ENCODE measurements at regions of chr2 and their contacts with region 1.

Region 1: DNA sequence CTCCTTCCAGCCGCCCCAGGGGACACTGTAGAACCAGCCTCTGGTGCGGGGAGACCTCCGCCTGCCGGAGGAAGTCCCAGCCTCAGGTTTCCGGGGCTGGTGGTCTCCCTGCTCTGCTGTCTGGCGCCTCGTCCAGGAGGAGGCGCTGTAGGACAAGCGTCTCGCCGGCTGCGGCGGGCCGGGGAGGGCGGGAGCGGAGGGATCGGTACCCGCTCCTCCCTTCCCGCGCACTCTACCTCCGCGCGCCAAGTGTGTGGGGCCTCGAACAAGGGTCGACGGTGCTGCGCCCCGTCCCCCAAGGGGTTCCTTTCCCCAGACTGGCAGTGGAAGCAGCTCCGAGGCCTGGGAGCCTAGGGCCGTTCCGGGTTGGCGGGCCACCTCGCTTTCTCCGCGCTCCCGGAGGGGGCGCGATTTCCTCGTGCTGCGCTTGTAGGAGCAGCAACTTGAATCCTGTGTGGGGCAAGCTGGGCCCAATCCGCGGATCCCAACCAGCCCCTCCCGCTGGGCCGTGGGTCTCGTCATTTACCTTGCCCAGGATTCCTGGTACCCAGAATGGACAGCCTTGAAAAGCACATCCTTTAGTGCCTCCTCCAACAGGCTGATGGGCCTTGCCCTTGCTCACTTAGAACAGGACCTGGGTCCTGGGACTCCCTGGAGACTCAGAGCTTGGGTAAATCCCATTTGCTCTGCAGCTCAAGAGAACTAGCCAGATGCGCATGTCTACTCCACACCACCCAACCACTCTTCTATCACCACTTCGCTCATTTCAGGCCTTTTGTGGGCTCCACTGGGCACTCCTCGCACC is 10.6 kb upstream of the HOXD4 start:
- DNase-seq: peak; percentile 83

Region 2: DNA sequence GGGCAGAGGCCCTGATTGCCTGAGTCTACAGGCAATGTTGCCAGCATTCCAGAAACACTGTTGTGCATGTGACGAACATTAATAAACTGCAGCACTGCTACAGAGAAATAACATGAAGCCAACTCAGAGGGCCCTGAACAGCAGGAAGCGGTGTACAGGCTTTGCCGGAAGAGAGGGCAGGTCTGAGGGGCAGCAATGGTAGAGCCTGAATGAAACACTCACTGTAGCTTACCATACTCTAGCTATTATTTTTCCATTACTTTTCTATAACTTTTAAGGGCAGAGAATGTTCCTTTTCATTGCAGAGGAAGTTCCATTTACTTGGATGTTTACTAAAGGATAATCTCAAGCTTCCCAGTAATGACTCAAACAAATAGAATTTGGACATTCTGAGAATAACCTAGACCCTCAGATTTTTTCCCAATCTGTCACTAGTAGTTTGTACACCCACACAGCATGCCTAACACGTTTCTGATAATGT is 278.9 kb after region 1 on chr2:
- in situ Hi-C with region 1: no loop called
- DNase-seq: no peak

Region 3: DNA sequence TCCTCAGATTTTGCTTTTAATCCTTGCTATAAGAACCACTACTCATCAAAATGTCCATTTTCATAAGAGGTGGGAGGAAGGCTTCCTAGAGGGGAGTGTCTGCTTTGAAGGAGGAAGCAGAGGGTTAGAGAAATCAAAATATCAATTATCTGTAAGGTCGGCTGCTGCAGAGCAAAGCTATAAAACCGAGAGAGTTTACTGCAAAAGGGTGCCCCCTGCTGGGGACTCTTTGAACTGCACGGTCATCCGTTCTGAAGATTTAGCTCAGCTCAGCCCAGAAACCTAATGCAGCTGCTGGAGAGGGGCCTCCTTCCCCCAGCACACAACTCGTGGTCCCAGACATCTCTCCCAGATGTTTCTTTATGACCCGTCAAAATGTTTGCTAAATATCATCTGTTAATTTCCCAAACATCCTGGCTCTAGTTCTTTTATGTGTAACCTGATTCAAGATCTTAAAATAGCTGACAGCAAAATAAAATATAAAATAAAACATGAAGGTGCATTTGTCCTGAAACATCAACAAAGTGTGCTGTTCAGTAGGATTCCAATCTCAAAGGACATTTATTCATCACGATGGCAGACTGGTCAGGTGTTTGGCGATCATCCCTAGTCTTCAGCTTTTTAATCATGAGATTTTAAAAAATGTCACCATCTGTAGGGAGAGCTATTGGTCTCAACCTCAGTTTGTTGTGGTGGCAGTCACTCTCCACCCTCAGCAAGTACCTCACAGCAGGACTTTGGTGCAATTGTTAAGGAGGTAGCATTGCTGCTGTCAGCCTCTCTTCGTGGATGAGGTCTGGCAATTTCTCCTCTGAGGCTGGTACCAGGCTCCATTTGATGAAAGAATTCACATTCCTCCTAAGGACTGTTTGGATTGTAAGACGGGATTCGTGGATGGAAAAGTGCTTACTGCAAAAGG is 314.4 kb after region 1 on chr2:
- in situ Hi-C with region 1: loop called (anchors 25 kb)
- DNase-seq: peak; percentile 74

Region 4: DNA sequence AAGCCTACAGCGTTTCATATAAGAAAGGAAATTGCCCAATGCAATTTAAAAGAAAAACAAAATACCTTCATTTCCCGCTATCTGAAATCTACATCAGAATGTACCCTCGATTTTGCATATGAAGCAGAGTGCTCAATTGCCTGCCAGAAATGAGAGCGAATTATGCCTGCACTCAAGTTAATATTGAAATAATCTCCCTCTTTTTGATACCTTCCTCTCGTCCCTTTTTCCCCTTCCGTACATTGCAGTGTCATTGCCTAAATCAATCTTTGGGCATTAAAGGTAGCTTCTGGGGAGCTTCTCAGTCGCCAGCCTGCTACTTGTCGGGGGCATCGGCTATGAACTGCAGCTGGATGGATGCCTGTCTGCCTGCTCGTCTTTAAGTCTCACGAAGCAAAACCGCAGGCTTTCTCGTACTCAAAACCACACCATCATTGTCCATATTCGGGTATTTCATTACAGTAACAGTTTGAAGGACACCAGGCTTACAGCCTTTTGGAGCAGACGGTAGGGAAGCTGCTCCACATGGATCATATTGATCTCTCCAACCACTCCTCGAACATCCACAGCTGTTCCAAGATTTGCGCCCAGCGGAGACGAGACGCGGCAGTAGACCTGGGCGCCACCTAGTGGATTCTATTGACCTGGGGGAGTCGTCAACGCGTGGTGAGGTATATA is 1007.9 kb after region 1 on chr2:
- in situ Hi-C with region 1: loop called (anchors 25 kb)
- DNase-seq: peak; percentile 82

Measured in KBM-7 (cell line).